ENCODE measurements at regions of chr9 and their contacts with region 1.

Region 1: GRCh38 chr9:123816817-123817472 is 113.0 kb downstream of the DENND1A start:
- DNase-seq: no peak
- H3K4me3 ChIP-seq: no peak overlapping the region
- H3K27me3 ChIP-seq: no peaks in the 10 kb centered on the region
- CTCF ChIP-seq: no peak

Region 2: GRCh38 chr9:123493627-123494026 is 323.3 kb before region 1 on chr9:
- CTCF ChIA-PET with region 1: no interaction called
- POLR2A ChIA-PET with region 1: no interaction called
- DNase-seq: no peak
- H3K4me3 ChIP-seq: no peak overlapping the region
- H3K27me3 ChIP-seq: no peaks in the 10 kb centered on the region
- CTCF ChIP-seq: no peak

Region 3: DNA sequence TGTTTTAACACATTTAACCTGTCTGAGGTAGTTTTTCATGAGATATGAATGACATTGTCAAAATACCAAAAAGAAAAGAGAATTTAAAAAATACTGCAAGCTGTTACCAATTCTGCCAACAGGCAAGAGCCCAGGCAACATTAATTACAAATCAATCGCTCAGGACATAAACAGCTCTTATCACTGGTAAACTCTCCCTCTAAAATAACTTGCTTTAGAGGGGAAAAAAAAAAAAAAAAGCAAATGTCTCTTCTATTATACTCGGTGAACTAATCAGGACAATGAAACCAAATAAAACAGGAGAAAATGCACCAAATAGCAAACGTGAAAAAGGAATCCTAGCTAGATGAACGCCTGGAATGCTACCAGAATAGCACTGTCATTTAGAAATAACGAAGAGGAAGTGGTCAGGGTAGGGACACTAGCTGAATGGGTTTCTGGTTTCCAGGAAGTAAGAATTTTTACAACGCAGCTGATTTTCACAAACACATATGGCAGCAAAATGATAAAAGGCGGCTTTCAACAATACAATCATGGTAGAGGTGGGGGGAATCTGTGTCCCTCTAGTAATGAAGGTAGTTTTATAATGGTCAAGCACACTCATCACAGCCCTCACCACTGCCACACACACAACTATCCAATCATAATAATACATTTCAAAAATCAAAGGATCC is 18.1 kb after region 1 on chr9:
- CTCF ChIA-PET with region 1: interaction called, 4 read pairs
- POLR2A ChIA-PET with region 1: interaction called, 12 read pairs
- DNase-seq: peak; percentile 21
- H3K4me3 ChIP-seq: 0 out of 2 replicates have a peak overlapping the region, but pooled peaks have one; percentile 2
- H3K27me3 ChIP-seq: no peaks in the 10 kb centered on the region
- CTCF ChIP-seq: no peak

Measured in BJ (cell line).